ENCODE measurements at regions of chr11 and their contacts with region 1.

Region 1: GRCh38 chr11:59216641-59217564 is 4.2 kb upstream of the MPEG1 start:
- DNase-seq: peak; percentile 99
- ATAC-seq: peak; percentile 88
- H3K4me3 ChIP-seq: no peak overlapping the region
- H3K27ac ChIP-seq: peak overlapping the region; percentile 91
- H3K4me1 ChIP-seq: peaks cover 76% of the 10 kb centered on the region
- H3K27me3 ChIP-seq: no peaks in the 10 kb centered on the region
- CTCF ChIP-seq: no peak
- EP300 ChIP-seq: peak; percentile 99 to 100
- POLR2A ChIP-seq: no peak
- RAD21 ChIP-seq: peak; percentile 40

Region 2: GRCh38 chr11:59106363-59107336 is 110.3 kb before region 1 on chr11 and contains the start of gene FAM111B:
- CTCF ChIA-PET with region 1: interaction called, 3 read pairs
- POLR2A ChIA-PET with region 1: no interaction called
- RAD21 ChIA-PET with region 1: no interaction called
- SMC1A ChIA-PET with region 1: no interaction called
- in situ Hi-C with region 1: no loop called
- intact Hi-C with region 1: loop called (anchors 5 kb)
- DNase-seq: peak; percentile 84
- ATAC-seq: peak; percentile 85
- H3K4me3 ChIP-seq: peak within 1 kb of the TSS; percentile 79
- H3K27ac ChIP-seq: peak within 1 kb of the TSS; percentile 89
- H3K4me1 ChIP-seq: peaks cover 7% of the 10 kb centered on the region
- H3K27me3 ChIP-seq: no peaks in the 10 kb centered on the region
- CTCF ChIP-seq: no peak
- EP300 ChIP-seq: no peak
- POLR2A ChIP-seq: peak; percentile 79
- RAD21 ChIP-seq: no peak
- polyA plus RNA-seq, gene FAM111B: 42.0 to 65.3 TPM

Region 3: GRCh38 chr11:59197991-59198390 is 18.9 kb before region 1 on chr11:
- CTCF ChIA-PET with region 1: interaction called, 1,180 read pairs
- POLR2A ChIA-PET with region 1: interaction called, 7 read pairs
- RAD21 ChIA-PET with region 1: interaction called, 17 read pairs
- SMC1A ChIA-PET with region 1: interaction called, 28 read pairs
- in situ Hi-C with region 1: no loop called
- intact Hi-C with region 1: loop called (anchors 1 kb)
- DNase-seq: no peak
- ATAC-seq: no peak
- H3K4me3 ChIP-seq: no peak overlapping the region
- H3K27ac ChIP-seq: peak overlapping the region; percentile 94
- H3K4me1 ChIP-seq: peaks cover 35% of the 10 kb centered on the region
- H3K27me3 ChIP-seq: no peaks in the 10 kb centered on the region
- CTCF ChIP-seq: no peak
- EP300 ChIP-seq: no peak
- POLR2A ChIP-seq: no peak
- RAD21 ChIP-seq: no peak

Region 4: DNA sequence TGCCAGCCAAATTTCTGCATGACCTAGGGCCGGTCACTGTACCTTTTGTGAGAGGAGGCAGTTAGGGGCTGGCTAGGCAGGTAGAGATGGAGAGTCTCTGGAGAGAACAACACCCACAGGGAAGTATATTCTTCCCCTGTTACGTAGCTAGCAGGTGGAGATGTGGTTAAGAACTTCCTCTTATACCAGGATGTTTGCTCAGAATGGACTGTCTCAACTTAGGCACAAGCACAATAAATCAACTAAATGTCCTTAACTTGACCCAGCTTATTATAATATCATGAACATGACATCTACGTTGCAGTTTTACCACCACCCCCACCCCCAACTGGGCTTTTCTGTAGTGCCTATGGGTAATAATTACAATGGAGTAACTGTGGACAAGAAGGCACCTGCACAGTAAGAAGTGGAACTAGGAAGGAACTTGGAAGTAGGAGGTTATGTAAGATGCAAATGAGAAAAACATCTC is 56.5 kb after region 1 on chr11:
- CTCF ChIA-PET with region 1: interaction called, 24 read pairs
- POLR2A ChIA-PET with region 1: interaction called, 4 read pairs
- RAD21 ChIA-PET with region 1: interaction called, 17 read pairs
- SMC1A ChIA-PET with region 1: interaction called, 18 read pairs
- in situ Hi-C with region 1: no loop called
- intact Hi-C with region 1: loop called (anchors 1 kb)
- DNase-seq: peak; percentile 79
- ATAC-seq: peak; percentile 93
- H3K4me3 ChIP-seq: no peak overlapping the region
- H3K27ac ChIP-seq: peak overlapping the region; percentile 77
- H3K4me1 ChIP-seq: peaks cover 35% of the 10 kb centered on the region
- H3K27me3 ChIP-seq: no peaks in the 10 kb centered on the region
- CTCF ChIP-seq: no peak
- EP300 ChIP-seq: peak; percentile 88 to 96
- POLR2A ChIP-seq: no peak
- RAD21 ChIP-seq: no peak

Region 5: DNA sequence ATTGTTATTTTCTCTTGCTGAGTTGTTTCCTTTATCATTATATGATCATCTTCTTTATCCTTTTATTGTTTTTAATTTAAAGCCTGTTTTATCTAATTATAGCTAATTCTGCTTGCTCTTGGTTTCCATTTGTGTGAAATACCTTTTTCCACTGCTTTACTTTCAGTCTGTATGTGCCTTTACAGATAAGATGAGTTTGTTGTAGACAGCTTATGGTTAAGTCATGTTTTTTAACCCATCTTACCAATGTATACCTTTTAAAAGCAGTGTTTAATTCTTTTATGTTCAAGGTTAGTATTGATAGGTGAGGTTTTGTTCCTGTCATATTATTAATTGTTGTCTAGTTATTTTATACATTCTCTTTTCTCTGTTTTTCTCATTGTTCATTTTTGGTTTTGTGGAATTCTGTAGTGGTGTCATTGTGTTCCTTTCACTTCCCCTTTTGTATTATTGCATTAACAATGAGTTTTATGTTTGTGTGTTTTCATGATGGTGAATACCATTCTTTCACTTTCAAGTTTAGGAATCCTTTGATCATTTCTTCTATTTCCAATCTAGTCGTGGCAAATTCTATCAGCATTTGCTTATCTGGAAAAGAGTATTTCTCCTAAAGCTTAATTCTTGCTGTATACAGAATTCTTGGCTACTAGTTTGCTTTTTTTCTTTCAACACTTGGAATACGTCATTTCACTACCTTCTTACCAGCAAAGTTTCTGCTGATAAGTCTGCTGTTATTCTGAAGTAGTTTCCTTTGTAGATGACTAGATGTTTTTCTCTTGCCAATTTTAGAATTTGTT is 163.6 kb after region 1 on chr11:
- CTCF ChIA-PET with region 1: no interaction called
- POLR2A ChIA-PET with region 1: no interaction called
- RAD21 ChIA-PET with region 1: no interaction called
- SMC1A ChIA-PET with region 1: no interaction called
- in situ Hi-C with region 1: no loop called
- intact Hi-C with region 1: loop called (anchors 2 kb)
- DNase-seq: peak; percentile 60
- ATAC-seq: peak; percentile 96
- H3K4me3 ChIP-seq: peak overlapping the region; percentile 43; the same call in 1 of the 2 replicates
- H3K27ac ChIP-seq: peak overlapping the region; percentile 67
- H3K4me1 ChIP-seq: peaks cover 5% of the 10 kb centered on the region
- H3K27me3 ChIP-seq: no peaks in the 10 kb centered on the region
- CTCF ChIP-seq: no peak
- EP300 ChIP-seq: peak; percentile 79 to 93
- POLR2A ChIP-seq: no peak
- RAD21 ChIP-seq: no peak

Region 6: GRCh38 chr11:59668950-59669610 is 452.2 kb after region 1 on chr11 and contains the start of gene PATL1:
- CTCF ChIA-PET with region 1: no interaction called
- POLR2A ChIA-PET with region 1: no interaction called
- RAD21 ChIA-PET with region 1: no interaction called
- SMC1A ChIA-PET with region 1: no interaction called
- in situ Hi-C with region 1: no loop called
- intact Hi-C with region 1: loop called (anchors 10 kb)
- DNase-seq: peak; percentile 94
- ATAC-seq: peak; percentile 95
- H3K4me3 ChIP-seq: peak within 1 kb of the TSS; percentile 98
- H3K27ac ChIP-seq: peak within 1 kb of the TSS; percentile 86
- H3K4me1 ChIP-seq: no peaks in the 10 kb centered on the region; the same call in 1 of the 2 replicates
- H3K27me3 ChIP-seq: no peaks in the 10 kb centered on the region
- CTCF ChIP-seq: no peak
- EP300 ChIP-seq: peak; percentile 10 to 45; a peak in 2 of 4 replicates
- POLR2A ChIP-seq: peak; percentile 81
- RAD21 ChIP-seq: no peak
- polyA plus RNA-seq, gene PATL1: 5.3 to 5.9 TPM

Measured in GM12878 (cell line).